ENCODE measurements at regions of chr19 and their contacts with region 1.

Region 1: GRCh38 chr19:8355631-8356402 is 8.1 kb upstream of the ANGPTL4 start:
- DNase-seq: no peak
- H3K4me3 Mint-ChIP-seq: no peak overlapping the region
- H3K27ac Mint-ChIP-seq: no peak overlapping the region
- H3K4me1 Mint-ChIP-seq: peaks cover 9% of the 10 kb centered on the region
- H3K27me3 Mint-ChIP-seq: peaks cover 18% of the 10 kb centered on the region

Region 2: DNA sequence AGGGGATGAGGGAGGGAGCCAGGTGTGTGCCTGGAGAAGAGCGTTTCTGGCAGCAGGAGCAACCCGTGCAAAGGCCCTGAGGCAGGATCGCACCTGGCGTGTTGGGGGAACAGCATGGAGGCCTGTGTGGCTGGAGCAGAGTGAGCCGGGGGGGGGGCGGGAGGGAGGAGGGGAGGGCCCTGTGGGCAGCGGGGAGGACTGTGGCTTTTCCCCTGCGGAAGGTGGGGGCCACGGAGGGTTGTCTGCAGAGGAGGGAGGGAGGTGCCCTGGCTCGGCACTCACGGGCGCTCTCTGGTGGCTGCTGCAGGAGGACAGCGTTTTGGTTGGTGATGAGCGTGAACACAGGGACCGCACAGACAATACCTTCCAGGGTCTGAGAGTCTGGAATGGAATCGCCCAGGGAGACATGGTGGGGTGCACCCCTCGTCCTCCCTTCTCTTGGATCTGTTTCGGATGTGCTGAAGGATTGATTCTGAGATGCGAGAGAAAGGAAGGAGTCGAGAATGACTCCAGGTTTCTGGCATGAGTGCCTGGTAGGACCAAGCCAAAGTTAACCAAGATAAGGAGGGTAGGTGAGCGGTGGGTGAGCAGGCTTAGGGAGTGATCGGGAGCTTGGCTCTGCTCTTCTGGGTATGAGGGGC is 40.9 kb after region 1 on chr19:
- intact Hi-C with region 1: loop called (anchors 1 kb)
- DNase-seq: peak; percentile 59
- H3K4me3 Mint-ChIP-seq: no peak overlapping the region
- H3K27ac Mint-ChIP-seq: peak overlapping the region; percentile 27
- H3K4me1 Mint-ChIP-seq: peaks cover 14% of the 10 kb centered on the region
- H3K27me3 Mint-ChIP-seq: no peaks in the 10 kb centered on the region

Region 3: GRCh38 chr19:8505680-8506401 is 150.0 kb after region 1 on chr19:
- intact Hi-C with region 1: loop called (anchors 1 kb)
- DNase-seq: peak; percentile 46
- H3K4me3 Mint-ChIP-seq: peak overlapping the region; percentile 90
- H3K27ac Mint-ChIP-seq: peak overlapping the region; percentile 31
- H3K4me1 Mint-ChIP-seq: peaks cover 9% of the 10 kb centered on the region
- H3K27me3 Mint-ChIP-seq: no peaks in the 10 kb centered on the region